ENCODE measurements at regions of chr11 and their contacts with region 1.

Region 1: GRCh38 chr11:93652161-93652597 is 9.3 kb upstream of the CEP295 start:
- DNase-seq: peak; percentile 92
- ATAC-seq: peak; percentile 33
- H3K4me3 ChIP-seq: no peak overlapping the region
- H3K27ac ChIP-seq: no peak overlapping the region
- H3K4me1 ChIP-seq: peaks cover 6% of the 10 kb centered on the region; the same call in 1 of the 2 replicates
- H3K27me3 ChIP-seq: peaks cover 26% of the 10 kb centered on the region
- CTCF ChIP-seq: peak; percentile 95

Region 2: GRCh38 chr11:93234602-93235207 is 417.5 kb before region 1 on chr11:
- CTCF ChIA-PET with region 1: interaction called, 5 read pairs
- POLR2A ChIA-PET with region 1: no interaction called
- intact Hi-C with region 1: loop called (anchors 1 kb)
- DNase-seq: peak; percentile 92
- ATAC-seq: peak; percentile 99
- H3K4me3 ChIP-seq: no peak overlapping the region
- H3K27ac ChIP-seq: no peak overlapping the region
- H3K4me1 ChIP-seq: no peaks in the 10 kb centered on the region
- H3K27me3 ChIP-seq: peaks cover 10% of the 10 kb centered on the region
- CTCF ChIP-seq: peak; percentile 97

Region 3: DNA sequence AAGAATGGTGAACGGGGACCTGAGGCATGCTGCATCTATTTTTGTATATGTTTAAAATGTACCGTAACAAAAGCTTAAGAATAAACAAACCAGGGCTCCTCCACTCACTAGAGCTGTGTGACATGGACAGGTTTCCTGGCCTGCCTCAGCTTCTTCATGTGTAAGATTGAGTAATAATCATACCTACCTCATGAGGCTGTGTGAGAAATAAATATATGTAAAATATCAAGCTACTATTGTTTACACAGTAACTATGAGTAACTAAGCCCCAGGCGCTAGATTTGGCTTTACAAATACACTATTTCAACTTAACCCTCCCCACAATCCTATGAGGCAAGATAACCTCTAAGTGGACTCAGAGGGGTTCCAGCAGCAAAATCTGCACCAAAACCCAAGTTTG is 175.4 kb before region 1 on chr11:
- CTCF ChIA-PET with region 1: no interaction called
- POLR2A ChIA-PET with region 1: no interaction called
- intact Hi-C with region 1: loop called (anchors 10 kb)
- DNase-seq: peak; percentile 98
- ATAC-seq: peak; percentile 79
- H3K4me3 ChIP-seq: peak overlapping the region; percentile 11; the same call in 1 of the 2 replicates
- H3K27ac ChIP-seq: peak overlapping the region; percentile 89
- H3K4me1 ChIP-seq: peaks cover 44% of the 10 kb centered on the region
- H3K27me3 ChIP-seq: no peaks in the 10 kb centered on the region
- CTCF ChIP-seq: no peak

Region 4: GRCh38 chr11:93577286-93577685 is 74.9 kb before region 1 on chr11:
- CTCF ChIA-PET with region 1: no interaction called
- POLR2A ChIA-PET with region 1: no interaction called
- intact Hi-C with region 1: loop called (anchors 5 kb)
- DNase-seq: peak; percentile 82
- ATAC-seq: peak; percentile 77
- H3K4me3 ChIP-seq: no peak overlapping the region
- H3K27ac ChIP-seq: peak overlapping the region; percentile 24
- H3K4me1 ChIP-seq: peaks cover 24% of the 10 kb centered on the region
- H3K27me3 ChIP-seq: no peaks in the 10 kb centered on the region
- CTCF ChIP-seq: no peak

Measured in PC-3 (cell line).